ENCODE measurements at regions of chr17 and their contacts with region 1.

Region 1: DNA sequence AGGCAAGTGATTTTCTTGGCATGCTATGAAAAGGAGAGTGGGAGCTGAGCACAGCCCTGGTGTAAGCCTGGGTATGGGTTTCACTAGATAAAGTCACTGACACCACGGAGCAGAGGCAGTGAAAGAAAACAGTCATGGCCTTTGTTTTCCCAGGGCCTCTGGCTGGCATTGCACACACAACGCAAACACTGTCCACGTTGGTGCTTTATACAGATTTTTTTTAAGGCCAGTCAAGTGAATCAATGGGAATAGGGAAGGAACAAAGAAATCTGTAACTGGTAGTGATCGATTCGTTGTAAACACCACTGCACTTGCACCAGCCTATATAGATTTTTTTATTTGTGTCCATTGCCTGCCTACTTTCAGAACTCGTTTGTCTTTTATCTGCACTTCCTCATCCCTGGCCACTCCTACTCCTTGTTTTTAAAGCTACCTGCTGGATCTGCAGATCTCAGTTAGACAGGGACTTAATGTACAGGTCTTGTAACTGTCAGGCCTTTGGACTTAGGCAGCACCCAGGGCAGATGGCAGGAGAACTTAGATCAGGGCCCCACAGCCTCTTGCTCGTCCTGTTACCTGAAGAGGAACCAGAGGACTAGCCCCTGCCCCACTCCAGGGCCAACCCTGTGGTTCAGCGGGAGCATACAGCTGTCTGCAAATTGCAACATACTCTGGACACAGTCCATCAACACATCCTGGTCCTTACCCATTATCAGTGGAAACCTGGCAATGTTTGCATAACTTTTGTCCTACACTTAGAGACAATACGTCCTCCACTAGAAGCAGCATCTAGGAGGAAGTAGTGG is 10.6 kb upstream of the TMIGD1 start:
- DNase-seq: no peak
- CTCF ChIP-seq: no peak

Region 2: GRCh38 chr17:30124273-30124796 is 220.2 kb before region 1 on chr17:
- CTCF ChIA-PET with region 1: interaction called, 20 read pairs
- POLR2A ChIA-PET with region 1: no interaction called
- DNase-seq: no peak
- CTCF ChIP-seq: no peak

Region 3: GRCh38 chr17:30235386-30236296 is 108.8 kb before region 1 on chr17 and contains the start of gene SLC6A4:
- CTCF ChIA-PET with region 1: no interaction called
- POLR2A ChIA-PET with region 1: no interaction called
- DNase-seq: peak; percentile 45
- CTCF ChIP-seq: no peak

Region 4: GRCh38 chr17:30323895-30324319 is 20.6 kb before region 1 on chr17:
- CTCF ChIA-PET with region 1: interaction called, 51 read pairs
- POLR2A ChIA-PET with region 1: no interaction called
- DNase-seq: peak; percentile 31
- CTCF ChIP-seq: no peak

Region 5: DNA sequence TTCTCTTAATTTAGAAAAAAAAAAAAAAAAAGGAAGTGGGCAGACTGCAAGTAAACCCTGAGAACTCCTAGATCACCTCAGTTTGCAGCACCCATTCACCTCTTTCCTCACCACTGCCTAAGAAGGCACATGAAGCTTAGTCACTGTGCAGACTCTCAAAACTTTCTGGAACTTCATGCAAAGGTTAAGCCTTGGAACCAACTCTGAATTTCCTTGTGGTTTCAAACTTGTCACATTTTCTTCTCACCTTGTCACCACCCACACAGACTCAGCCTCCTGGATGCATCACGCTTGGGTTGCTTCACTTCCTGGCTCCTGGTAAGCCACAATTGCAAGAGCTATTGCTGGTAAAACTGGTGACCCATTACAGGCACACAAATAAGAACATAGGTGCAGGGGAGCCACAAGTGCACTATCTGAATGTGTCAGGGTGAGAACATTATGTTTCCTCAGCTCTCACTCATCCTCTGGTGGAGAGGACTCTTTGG is 19.3 kb after region 1 on chr17:
- CTCF ChIA-PET with region 1: interaction called, 30 read pairs
- POLR2A ChIA-PET with region 1: no interaction called
- DNase-seq: peak; percentile 71
- CTCF ChIP-seq: no peak

Region 6: GRCh38 chr17:30395398-30396022 is 51.0 kb after region 1 on chr17:
- CTCF ChIA-PET with region 1: no interaction called
- POLR2A ChIA-PET with region 1: no interaction called
- DNase-seq: no peak
- CTCF ChIP-seq: no peak

Region 7: DNA sequence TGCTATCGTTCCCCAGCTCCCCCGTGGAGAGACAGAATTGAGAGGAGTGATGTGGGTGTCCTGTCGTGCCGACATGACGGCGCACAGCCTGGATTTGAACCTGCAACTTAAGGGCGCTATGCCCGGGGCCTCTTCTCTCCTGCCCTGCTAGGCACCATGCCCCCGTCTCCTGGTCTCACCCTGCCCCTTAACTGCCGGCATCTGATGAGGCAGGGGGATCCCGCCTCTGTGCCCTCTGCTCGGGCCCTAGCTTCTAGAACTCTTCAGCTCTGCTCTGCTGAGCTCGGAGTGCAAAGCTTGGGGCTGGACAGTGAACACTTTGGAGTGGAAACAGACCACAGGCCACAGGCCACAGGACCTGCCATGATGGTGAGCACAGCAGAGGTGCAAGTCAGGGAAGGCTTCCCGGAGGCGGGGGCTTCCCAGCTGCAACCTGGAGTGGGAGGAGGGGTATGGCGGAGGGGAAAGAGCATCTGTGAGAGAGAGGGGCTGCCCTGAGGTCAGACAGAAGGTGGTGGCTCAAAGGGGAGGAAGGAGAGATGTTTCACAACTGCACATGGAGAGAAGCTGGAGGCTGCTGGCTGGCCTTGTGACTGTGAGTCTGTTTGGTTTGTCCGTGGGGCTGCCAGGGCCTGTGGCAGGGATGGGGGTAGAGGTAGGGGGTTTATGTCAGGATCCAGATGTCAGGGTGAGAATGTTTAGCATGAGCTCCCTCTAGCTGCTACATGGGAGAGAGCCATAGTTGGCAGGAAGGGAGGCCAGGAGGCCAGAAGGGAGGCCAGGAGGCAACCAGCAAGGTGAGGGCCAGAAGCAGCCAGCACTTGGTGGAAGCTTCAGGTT is 372.2 kb after region 1 on chr17:
- CTCF ChIA-PET with region 1: interaction called, 10 read pairs
- POLR2A ChIA-PET with region 1: no interaction called
- DNase-seq: peak; percentile 11
- CTCF ChIP-seq: peak; percentile 40